Mammary epithelial cell (primary cell): ENCODE measurements at regions of chr20 and their contacts with region 1.

Region 1: GRCh38 chr20:49424536-49424935 is 57.9 kb downstream of the KCNB1 start:
- DNase-seq: no peak
- H3K4me3 ChIP-seq: no peak overlapping the region
- H3K27ac ChIP-seq: no peak overlapping the region
- H3K4me1 ChIP-seq: peaks cover 25% of the 10 kb centered on the region
- H3K27me3 ChIP-seq: no peaks in the 10 kb centered on the region
- CTCF ChIP-seq: no peak

Region 2: DNA sequence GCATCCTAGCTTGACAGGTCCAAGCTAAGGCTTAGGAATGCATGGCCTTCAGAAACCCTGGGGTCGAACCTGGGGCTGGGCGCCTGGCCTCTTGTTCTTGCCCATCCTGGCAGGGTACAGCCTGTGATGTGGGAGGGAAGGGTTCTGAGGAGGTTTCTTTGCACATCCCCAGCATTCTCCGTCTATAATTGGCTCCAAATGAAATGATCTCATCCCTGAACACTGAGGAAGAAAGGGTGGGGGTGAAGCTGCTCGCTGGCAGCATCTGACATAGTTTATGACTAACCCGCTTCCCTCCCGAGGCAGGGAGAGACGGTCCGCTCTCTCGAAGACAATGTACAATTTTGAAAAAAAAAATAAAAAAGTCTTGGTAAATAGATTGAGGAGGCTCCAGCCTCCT is 79.6 kb before region 1 on chr20:
- CTCF ChIA-PET with region 1: no interaction called
- dilution Hi-C with region 1: loop called (anchors 5 kb)
- in situ Hi-C with region 1: no loop called
- intact Hi-C with region 1: loop called (anchors 5 kb)
- DNase-seq: peak; percentile 84
- H3K4me3 ChIP-seq: peak overlapping the region in 1 of 3 experiments; percentile 16
- H3K27ac ChIP-seq: peak overlapping the region; percentile 78
- H3K4me1 ChIP-seq: peaks cover 19% of the 10 kb centered on the region
- H3K27me3 ChIP-seq: no peaks in the 10 kb centered on the region
- CTCF ChIP-seq: no peak

Region 3: GRCh38 chr20:49384437-49385088 is 40.0 kb before region 1 on chr20:
- CTCF ChIA-PET with region 1: no interaction called
- dilution Hi-C with region 1: loop called (anchors 5 kb)
- in situ Hi-C with region 1: no loop called
- intact Hi-C with region 1: no loop called
- DNase-seq: no peak
- H3K4me3 ChIP-seq: no peak overlapping the region
- H3K27ac ChIP-seq: no peak overlapping the region
- H3K4me1 ChIP-seq: peaks cover 17% of the 10 kb centered on the region
- H3K27me3 ChIP-seq: no peaks in the 10 kb centered on the region
- CTCF ChIP-seq: peak; percentile 64 to 77

Region 4: DNA sequence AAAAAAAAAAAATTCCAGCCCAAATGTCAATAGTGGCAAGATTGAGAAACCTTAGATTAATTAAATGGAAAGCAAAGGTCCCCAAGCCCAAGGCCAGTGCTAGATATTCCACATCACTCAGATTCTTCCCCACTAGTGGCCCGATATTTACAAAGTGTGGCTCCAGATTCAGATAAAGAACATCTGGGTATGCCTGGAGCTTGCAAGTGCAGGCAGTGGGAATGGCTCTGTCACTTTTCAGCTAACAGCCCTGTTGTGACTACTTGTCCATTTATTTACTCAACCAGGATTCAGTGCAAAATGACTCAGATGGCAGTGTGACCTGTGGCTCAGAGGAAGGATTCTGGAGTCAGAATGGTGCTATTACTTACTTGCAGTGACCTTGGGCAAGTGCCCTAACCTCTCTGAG is 66.2 kb after region 1 on chr20:
- CTCF ChIA-PET with region 1: no interaction called
- dilution Hi-C with region 1: loop called (anchors 5 kb)
- in situ Hi-C with region 1: no loop called
- intact Hi-C with region 1: no loop called
- DNase-seq: no peak
- H3K4me3 ChIP-seq: no peak overlapping the region
- H3K27ac ChIP-seq: no peak overlapping the region
- H3K4me1 ChIP-seq: no peaks in the 10 kb centered on the region
- H3K27me3 ChIP-seq: no peaks in the 10 kb centered on the region
- CTCF ChIP-seq: no peak

Region 5: GRCh38 chr20:49790077-49790798 is 365.7 kb after region 1 on chr20:
- CTCF ChIA-PET with region 1: no interaction called
- dilution Hi-C with region 1: no loop called
- in situ Hi-C with region 1: no loop called
- intact Hi-C with region 1: no loop called
- DNase-seq: no peak
- H3K4me3 ChIP-seq: no peak overlapping the region
- H3K27ac ChIP-seq: no peak overlapping the region
- H3K4me1 ChIP-seq: no peaks in the 10 kb centered on the region
- H3K27me3 ChIP-seq: no peaks in the 10 kb centered on the region
- CTCF ChIP-seq: no peak